ENCODE measurements at regions of chr5 and their contacts with region 1.

Region 1: DNA sequence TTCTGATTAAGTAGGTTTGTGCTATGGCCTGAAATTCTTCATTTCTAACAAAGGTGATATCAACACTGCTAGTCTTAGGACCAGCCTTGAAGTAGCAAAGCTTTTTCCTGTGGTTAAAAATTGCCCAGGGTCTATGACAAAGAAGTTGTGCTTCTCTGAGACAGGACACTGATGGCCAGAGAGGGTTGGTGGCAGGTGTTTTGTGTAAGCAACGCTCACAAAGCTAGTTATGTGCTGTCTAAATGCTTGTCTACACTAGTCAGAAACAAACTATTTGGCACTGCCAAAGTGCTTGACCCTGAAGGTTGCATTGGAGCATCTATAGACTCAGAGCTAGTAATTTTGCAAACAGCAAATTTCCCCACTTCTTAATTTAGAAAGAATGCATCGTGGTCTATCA is 44.1 kb upstream of the SELENOP start:
- DNase-seq: no peak
- H3K4me3 ChIP-seq: no peak overlapping the region
- H3K27ac ChIP-seq: no peak overlapping the region
- H3K4me1 ChIP-seq: no peaks in the 10 kb centered on the region
- H3K27me3 ChIP-seq: no peaks in the 10 kb centered on the region
- CTCF ChIP-seq: no peak
- POLR2A ChIP-seq: no peak

Region 2: DNA sequence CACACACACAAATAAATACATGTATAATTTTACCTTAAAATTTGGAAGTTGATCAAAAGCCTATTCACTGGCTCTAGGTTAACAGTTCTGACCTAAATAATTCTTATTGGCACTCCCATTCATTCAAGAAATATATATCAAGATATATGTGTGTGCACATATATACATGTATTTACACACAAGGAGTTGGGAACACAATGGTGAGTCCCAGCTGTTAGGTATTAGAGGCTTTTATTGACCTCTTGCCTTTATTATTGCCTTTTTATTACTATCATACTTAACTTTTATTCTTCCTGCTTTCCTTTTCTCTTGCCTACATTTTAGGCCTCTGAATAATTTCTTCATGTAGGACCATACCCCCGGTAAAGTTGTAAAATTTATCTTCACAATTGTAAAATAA is 74.2 kb before region 1 on chr5:
- CTCF ChIA-PET with region 1: no interaction called
- POLR2A ChIA-PET with region 1: no interaction called
- dilution Hi-C with region 1: no loop called
- intact Hi-C with region 1: loop called (anchors 2 kb)
- DNase-seq: no peak
- H3K4me3 ChIP-seq: no peak overlapping the region
- H3K27ac ChIP-seq: no peak overlapping the region
- H3K4me1 ChIP-seq: no peaks in the 10 kb centered on the region
- H3K27me3 ChIP-seq: no peaks in the 10 kb centered on the region
- CTCF ChIP-seq: no peak
- POLR2A ChIP-seq: no peak